Sigmoid colon (tissue), 7 donors: ENCODE measurements at regions of chrX and their contacts with region 1.

Region 1: GRCh38 chrX:132292793-132293192 is 73.5 kb upstream of the RAP2C start:
- DNase-seq: no peak
- H3K4me3 ChIP-seq: no peak overlapping the region
- H3K27ac ChIP-seq: no peak overlapping the region
- H3K4me1 ChIP-seq: no peaks in the 10 kb centered on the region
- H3K27me3 ChIP-seq: no peaks in the 10 kb centered on the region
- CTCF ChIP-seq: peak in 3 of 4 experiments; percentile 29 to 44 (median 39)
- EP300 ChIP-seq: no peak
- POLR2A ChIP-seq: no peak

Region 2: DNA sequence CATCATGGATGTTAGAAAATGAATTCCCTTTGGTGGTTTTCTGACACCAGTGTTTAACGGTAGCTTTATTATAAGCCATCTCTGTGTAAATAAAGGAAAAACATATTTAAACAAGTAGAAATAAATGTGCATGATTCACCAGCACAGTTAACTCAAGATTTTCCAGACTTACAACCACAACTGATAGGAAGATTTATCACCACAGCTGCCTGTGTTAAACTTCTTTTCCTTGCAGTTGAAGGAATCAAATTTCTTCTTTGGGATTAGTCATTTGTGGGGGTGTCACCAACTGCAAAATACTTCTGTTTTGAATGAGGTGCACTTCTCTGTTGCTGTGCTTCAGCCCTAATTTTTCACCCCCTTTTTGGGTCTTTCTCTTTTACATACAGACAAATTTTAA is 397.8 kb before region 1 on chrX:
- intact Hi-C with region 1: no loop called
- DNase-seq: no peak
- H3K4me3 ChIP-seq: no peak overlapping the region
- H3K27ac ChIP-seq: no peak overlapping the region
- H3K4me1 ChIP-seq: no peaks in the 10 kb centered on the region
- H3K27me3 ChIP-seq: no peaks in the 10 kb centered on the region
- CTCF ChIP-seq: no peak
- EP300 ChIP-seq: no peak
- POLR2A ChIP-seq: no peak

Region 3: GRCh38 chrX:132615391-132616131 is 322.8 kb after region 1 on chrX:
- intact Hi-C with region 1: loop called (anchors 5 kb)
- DNase-seq: no peak
- H3K4me3 ChIP-seq: no peak overlapping the region
- H3K27ac ChIP-seq: no peak overlapping the region
- H3K4me1 ChIP-seq: no peaks in the 10 kb centered on the region
- H3K27me3 ChIP-seq: peaks cover 0 to 3% (median 0%) of the 10 kb centered on the region in 3 donors
- CTCF ChIP-seq: no peak
- EP300 ChIP-seq: no peak
- POLR2A ChIP-seq: no peak

Region 4: GRCh38 chrX:132631579-132632232 is 338.9 kb after region 1 on chrX:
- intact Hi-C with region 1: loop called (anchors 5 kb)
- DNase-seq: no peak
- H3K4me3 ChIP-seq: no peak overlapping the region
- H3K27ac ChIP-seq: no peak overlapping the region
- H3K4me1 ChIP-seq: no peaks in the 10 kb centered on the region
- H3K27me3 ChIP-seq: no peaks in the 10 kb centered on the region
- CTCF ChIP-seq: peak; percentile 7 to 52 (median 26)
- EP300 ChIP-seq: no peak
- POLR2A ChIP-seq: no peak